A549 (cell line): ENCODE measurements at regions of chr11 and their contacts with region 1.

Region 1: DNA sequence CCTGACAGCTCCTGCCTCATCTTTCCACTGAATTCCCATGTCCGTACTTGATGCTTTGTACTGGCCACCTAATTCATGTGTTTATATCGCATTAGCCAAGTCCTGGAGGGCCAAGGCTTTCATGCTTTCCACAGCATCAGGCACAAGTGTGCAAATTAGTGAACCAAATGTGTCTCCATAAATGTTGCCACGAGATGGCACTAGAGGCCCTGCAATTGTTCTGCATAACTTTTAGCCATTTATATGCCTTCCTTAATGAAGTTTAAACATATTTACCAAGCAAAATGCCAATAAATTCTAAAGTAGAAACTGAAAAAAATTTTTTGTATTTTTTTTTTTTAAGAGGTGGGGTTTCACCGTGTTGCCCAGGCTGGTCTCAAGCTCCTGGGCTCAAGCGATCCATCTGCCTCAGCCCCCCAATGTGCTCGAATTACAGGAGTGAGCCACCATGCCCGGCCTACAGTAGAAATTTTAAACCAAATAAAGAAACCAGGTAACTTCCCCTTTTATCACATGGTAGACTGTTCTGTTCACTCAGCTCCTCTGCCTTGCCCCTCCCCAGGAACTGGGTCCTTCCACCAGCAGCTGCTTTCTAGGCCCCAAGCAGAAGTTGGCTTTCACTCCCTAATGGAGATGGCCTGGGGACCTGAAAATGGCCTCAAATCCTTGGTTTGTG is 20.8 kb upstream of the IL18BP start:
- DNase-seq: peak; percentile 44 to 50
- ATAC-seq: peak; percentile 68 to 83; a peak in 4 of 6 replicates
- H3K4me3 ChIP-seq: no peak overlapping the region
- H3K27ac ChIP-seq: peak overlapping the region; percentile 35 to 52; a peak in 2 of 6 replicates
- H3K4me1 ChIP-seq: peaks cover 7% of the 10 kb centered on the region; the same call in 1 of the 3 replicates
- CTCF ChIP-seq: peak; percentile 81
- EP300 ChIP-seq: no peak
- POLR2A ChIP-seq: no peak
- RAD21 ChIP-seq: peak; percentile 67 to 73

Region 2: GRCh38 chr11:71928737-71929452 is 49.0 kb before region 1 on chr11 and contains the start of gene RNF121:
- CTCF ChIA-PET with region 1: interaction called, 32 read pairs
- POLR2A ChIA-PET with region 1: interaction called, 3 read pairs
- DNase-seq: peak; percentile 95 to 96
- ATAC-seq: peak; percentile 97
- H3K4me3 ChIP-seq: peak within 1 kb of the TSS; percentile 90
- H3K27ac ChIP-seq: peak within 1 kb of the TSS; percentile 91 to 95
- H3K4me1 ChIP-seq: peaks cover 47% of the 10 kb centered on the region
- CTCF ChIP-seq: no peak
- EP300 ChIP-seq: no peak
- POLR2A ChIP-seq: peak; percentile 90
- RAD21 ChIP-seq: no peak
- polyA plus RNA-seq, gene RNF121: 102 and 105 TPM in 2 replicates

Region 3: DNA sequence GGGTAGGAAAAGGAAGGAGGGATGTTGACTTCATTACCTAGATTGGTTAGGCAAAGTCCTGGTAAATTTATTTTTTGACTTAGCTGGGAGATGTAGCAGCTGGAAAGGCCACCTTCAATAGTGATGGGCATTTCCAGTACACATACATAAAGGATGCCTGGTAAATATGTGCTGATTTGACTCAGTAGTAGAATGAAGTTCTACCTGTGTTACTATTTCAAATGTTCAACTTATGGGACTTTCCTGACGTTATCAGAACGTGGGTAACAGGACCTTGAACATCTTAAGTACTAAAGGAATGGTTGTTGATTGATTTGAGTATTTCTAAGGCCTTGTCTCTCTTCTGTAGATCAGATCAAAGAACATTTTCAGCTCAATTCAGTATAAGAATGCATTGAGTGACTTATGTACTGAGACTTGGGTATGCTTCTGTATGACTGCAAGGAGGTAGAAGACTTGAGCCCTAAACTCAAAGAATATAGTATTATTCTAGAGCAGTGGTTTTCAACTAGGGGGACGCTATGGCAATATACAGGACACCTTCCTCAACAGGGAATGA is 21.9 kb before region 1 on chr11:
- CTCF ChIA-PET with region 1: interaction called, 14 read pairs
- POLR2A ChIA-PET with region 1: no interaction called
- DNase-seq: no peak
- ATAC-seq: no peak
- H3K4me3 ChIP-seq: no peak overlapping the region
- H3K27ac ChIP-seq: no peak overlapping the region
- H3K4me1 ChIP-seq: peaks cover 64% of the 10 kb centered on the region
- CTCF ChIP-seq: no peak
- EP300 ChIP-seq: no peak
- POLR2A ChIP-seq: no peak
- RAD21 ChIP-seq: no peak

Region 4: DNA sequence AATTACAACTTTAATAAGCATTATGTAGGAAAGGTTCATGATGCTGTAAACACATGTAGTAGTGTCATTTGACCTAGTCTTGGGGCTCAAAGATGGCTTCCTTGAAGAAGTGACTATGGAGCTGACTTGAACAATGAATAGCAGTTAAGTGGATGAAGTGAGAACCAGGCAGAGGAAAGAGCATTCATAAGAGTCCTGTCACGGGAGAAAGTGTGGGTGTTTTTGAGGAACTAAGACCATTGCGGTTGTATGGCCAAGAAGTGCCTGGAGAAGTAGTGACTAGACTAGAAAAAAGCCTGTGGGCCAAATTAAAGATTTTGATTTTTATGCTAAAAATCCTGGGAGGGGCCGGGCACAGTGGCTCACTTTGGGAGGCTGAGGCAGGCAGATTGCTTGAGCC is 13.6 kb after region 1 on chr11:
- CTCF ChIA-PET with region 1: interaction called, 60 read pairs
- POLR2A ChIA-PET with region 1: no interaction called
- DNase-seq: no peak
- ATAC-seq: no peak
- H3K4me3 ChIP-seq: no peak overlapping the region
- H3K27ac ChIP-seq: no peak overlapping the region
- H3K4me1 ChIP-seq: 0 out of 3 replicates have a peak, but pooled peaks cover 4% of the 10 kb centered on the region
- CTCF ChIP-seq: no peak
- EP300 ChIP-seq: no peak
- POLR2A ChIP-seq: no peak
- RAD21 ChIP-seq: no peak

Region 5: DNA sequence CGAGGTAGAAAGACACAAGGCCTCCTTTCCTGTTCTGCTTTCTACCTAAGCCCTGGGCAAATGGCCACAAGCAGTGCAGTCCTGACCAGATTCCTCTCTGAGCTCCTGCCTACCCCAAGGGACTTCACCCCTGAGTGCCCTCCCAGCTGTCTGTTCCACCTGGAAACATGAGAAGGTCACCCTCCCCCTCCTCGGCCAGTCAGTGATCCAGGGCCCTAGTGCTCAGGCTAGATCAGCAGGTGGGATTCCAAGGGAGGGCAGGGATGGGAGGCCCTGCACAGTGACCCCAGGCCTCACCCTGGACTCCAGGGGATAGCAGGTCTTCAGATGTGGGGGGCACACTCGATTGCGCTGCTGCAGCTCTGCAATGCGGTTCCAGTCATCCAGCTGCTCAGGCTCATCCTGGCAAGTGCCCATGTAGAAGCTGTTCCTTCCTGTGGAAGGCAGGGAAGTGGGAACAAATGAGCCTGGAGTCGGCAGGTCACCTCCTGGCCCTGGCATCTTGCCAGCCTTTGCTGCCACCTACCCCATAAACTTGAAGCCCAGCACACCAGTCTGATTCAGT is 27.1 kb after region 1 on chr11:
- CTCF ChIA-PET with region 1: interaction called, 37 read pairs
- POLR2A ChIA-PET with region 1: no interaction called
- DNase-seq: no peak
- ATAC-seq: no peak
- H3K4me3 ChIP-seq: no peak overlapping the region
- H3K27ac ChIP-seq: no peak overlapping the region
- H3K4me1 ChIP-seq: no peaks in the 10 kb centered on the region
- CTCF ChIP-seq: no peak
- EP300 ChIP-seq: no peak
- POLR2A ChIP-seq: no peak
- RAD21 ChIP-seq: no peak

Region 6: GRCh38 chr11:72162888-72163492 is 185.1 kb after region 1 on chr11:
- CTCF ChIA-PET with region 1: no interaction called
- POLR2A ChIA-PET with region 1: no interaction called
- DNase-seq: no peak
- ATAC-seq: no peak
- H3K4me3 ChIP-seq: no peak overlapping the region
- H3K27ac ChIP-seq: no peak overlapping the region; a peak in 1 of 6 replicates
- H3K4me1 ChIP-seq: peaks cover 9% of the 10 kb centered on the region
- CTCF ChIP-seq: no peak
- EP300 ChIP-seq: no peak
- POLR2A ChIP-seq: no peak
- RAD21 ChIP-seq: no peak